ENCODE measurements at regions of chr14 and their contacts with region 1.

Region 1: DNA sequence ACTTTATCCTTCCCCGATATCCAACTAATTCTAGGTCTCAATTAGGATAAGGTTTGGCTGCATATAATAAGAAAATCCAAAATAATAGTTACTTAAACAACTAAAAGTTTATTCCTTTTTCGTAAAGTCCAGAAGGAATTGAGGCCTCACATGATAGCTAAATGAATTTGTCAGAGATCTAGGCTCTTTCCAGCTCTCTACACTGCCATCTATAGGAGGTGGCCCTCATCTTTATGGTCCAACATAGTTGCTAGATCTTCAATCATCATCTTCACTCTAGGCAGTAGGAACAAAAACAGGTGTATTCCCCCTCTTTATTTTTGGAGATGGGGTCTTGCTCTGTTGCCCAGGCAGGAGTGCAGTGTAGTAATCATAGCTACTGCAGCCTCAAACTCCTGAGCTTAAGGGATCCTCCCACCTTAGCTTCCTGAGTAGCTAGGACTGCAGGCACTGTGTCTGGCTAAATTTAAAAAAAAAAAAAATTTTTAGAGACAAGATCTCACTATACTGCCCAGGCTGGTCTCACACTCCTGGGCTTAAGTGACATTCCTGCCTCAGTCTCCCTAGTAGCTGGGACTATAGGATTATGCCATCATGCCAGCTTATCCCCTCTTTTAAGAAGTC is 46.5 kb upstream of the SAV1 start:
- DNase-seq: no peak
- ATAC-seq: peak; percentile 71
- H3K4me3 Mint-ChIP-seq: no peak overlapping the region
- H3K27ac Mint-ChIP-seq: no peak overlapping the region
- H3K4me1 Mint-ChIP-seq: peaks cover 4% of the 10 kb centered on the region; the same call in 1 of the 2 replicates
- H3K27me3 Mint-ChIP-seq: no peaks in the 10 kb centered on the region
- CTCF ChIP-seq: no peak

Region 2: DNA sequence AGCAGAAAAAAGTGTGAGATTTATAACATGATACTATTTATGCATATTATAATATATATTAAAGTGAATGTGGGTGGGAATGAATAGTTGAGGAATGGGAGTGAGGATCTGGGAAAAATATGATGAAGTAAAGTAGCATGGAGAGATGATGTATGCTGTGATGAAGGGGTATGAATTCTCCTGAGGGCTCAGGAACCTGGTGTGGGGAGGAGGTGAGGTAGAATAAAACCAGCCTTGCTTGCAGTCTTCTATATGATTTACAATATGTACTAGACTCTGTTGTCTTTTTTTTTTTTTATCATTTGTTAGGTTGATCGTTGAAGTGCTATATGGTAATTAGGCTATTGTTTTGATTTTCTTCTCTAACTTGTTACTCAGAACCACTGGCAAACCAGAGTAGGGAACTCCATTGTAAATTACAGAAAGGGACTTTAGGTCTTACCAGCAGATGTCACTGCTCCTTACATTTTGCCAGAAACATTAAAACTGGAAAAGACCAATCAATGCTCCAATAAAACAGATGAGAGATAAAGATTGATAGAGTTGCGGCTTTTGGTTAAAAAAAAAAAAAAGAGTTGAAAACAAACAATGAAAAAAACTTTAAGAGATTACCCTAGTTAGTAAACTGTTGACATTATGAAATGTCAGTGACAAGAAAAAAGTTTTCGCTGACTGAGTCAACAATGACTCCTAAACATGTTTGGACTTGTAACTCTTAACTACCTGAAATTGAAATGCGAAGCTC is 114.7 kb before region 1 on chr14:
- CTCF ChIA-PET with region 1: interaction called, 16 read pairs
- POLR2A ChIA-PET with region 1: no interaction called
- DNase-seq: no peak
- ATAC-seq: peak; percentile 78
- H3K4me3 Mint-ChIP-seq: no peak overlapping the region
- H3K27ac Mint-ChIP-seq: 0 out of 2 replicates have a peak overlapping the region, but pooled peaks have one; percentile 39
- H3K4me1 Mint-ChIP-seq: peaks cover 19% of the 10 kb centered on the region
- H3K27me3 Mint-ChIP-seq: no peaks in the 10 kb centered on the region
- CTCF ChIP-seq: no peak

Region 3: GRCh38 chr14:50667996-50668825 is 46.4 kb before region 1 on chr14 and contains the start of gene SAV1:
- CTCF ChIA-PET with region 1: interaction called, 10 read pairs
- POLR2A ChIA-PET with region 1: no interaction called
- DNase-seq: peak; percentile 80
- ATAC-seq: peak; percentile 67
- H3K4me3 Mint-ChIP-seq: no peak within 1 kb of the TSS; the same call in 1 of the 2 replicates
- H3K27ac Mint-ChIP-seq: peak within 1 kb of the TSS; percentile 98
- H3K4me1 Mint-ChIP-seq: peaks cover 21% of the 10 kb centered on the region
- H3K27me3 Mint-ChIP-seq: no peaks in the 10 kb centered on the region
- CTCF ChIP-seq: no peak
- total RNA-seq, gene SAV1: 59.9 to 64.1 TPM (median 61.0 TPM) in 3 replicates

Region 4: GRCh38 chr14:50704454-50705010 is 10.0 kb before region 1 on chr14:
- CTCF ChIA-PET with region 1: interaction called, 11 read pairs
- POLR2A ChIA-PET with region 1: no interaction called
- DNase-seq: no peak
- ATAC-seq: no peak
- H3K4me3 Mint-ChIP-seq: no peak overlapping the region
- H3K27ac Mint-ChIP-seq: no peak overlapping the region
- H3K4me1 Mint-ChIP-seq: no peaks in the 10 kb centered on the region
- H3K27me3 Mint-ChIP-seq: peaks cover 6% of the 10 kb centered on the region; the same call in 1 of the 2 replicates
- CTCF ChIP-seq: no peak

Region 5: DNA sequence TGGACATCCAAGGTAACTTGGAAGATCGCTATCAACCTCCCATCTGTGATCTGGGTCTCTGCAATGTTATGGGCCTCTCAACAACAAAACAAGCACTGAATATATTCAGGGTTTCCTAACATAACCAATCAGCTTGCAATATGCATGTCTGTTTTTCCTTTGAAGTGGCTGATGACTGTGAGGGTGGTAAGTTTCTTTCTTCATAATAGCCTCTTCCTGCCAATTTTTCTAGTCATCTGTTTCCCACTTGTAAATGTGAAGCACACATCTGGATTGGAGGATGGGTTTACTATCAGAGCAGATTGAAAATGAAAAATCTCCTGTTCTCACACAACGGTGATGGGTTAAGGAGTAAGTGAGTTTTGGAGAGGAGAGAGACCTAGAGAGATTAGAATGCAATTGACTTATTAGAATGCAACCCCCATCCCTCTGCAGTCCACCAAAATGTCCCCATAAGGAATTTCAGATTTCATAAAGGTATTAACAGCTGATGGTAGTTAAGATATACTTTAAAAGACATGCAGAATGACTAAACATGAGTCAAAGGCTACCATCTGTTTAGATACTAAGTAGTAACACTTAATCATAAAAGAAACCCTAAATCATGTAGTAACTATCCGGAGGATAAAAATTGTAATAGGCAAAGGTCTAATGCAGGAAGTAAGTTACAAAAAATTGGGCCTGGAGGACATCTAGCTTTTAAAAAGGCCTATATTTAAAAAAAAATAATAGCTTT is 12.0 kb after region 1 on chr14:
- CTCF ChIA-PET with region 1: interaction called, 11 read pairs
- POLR2A ChIA-PET with region 1: no interaction called
- DNase-seq: no peak
- ATAC-seq: no peak
- H3K4me3 Mint-ChIP-seq: no peak overlapping the region
- H3K27ac Mint-ChIP-seq: no peak overlapping the region
- H3K4me1 Mint-ChIP-seq: no peaks in the 10 kb centered on the region
- H3K27me3 Mint-ChIP-seq: no peaks in the 10 kb centered on the region
- CTCF ChIP-seq: no peak

Region 6: GRCh38 chr14:50736932-50737419 is 22.4 kb after region 1 on chr14:
- CTCF ChIA-PET with region 1: interaction called, 15 read pairs
- POLR2A ChIA-PET with region 1: interaction called, 10 read pairs
- DNase-seq: no peak
- ATAC-seq: no peak
- H3K4me3 Mint-ChIP-seq: no peak overlapping the region
- H3K27ac Mint-ChIP-seq: no peak overlapping the region
- H3K4me1 Mint-ChIP-seq: peaks cover 3% of the 10 kb centered on the region; the same call in 1 of the 2 replicates
- H3K27me3 Mint-ChIP-seq: no peaks in the 10 kb centered on the region
- CTCF ChIP-seq: no peak

Region 7: DNA sequence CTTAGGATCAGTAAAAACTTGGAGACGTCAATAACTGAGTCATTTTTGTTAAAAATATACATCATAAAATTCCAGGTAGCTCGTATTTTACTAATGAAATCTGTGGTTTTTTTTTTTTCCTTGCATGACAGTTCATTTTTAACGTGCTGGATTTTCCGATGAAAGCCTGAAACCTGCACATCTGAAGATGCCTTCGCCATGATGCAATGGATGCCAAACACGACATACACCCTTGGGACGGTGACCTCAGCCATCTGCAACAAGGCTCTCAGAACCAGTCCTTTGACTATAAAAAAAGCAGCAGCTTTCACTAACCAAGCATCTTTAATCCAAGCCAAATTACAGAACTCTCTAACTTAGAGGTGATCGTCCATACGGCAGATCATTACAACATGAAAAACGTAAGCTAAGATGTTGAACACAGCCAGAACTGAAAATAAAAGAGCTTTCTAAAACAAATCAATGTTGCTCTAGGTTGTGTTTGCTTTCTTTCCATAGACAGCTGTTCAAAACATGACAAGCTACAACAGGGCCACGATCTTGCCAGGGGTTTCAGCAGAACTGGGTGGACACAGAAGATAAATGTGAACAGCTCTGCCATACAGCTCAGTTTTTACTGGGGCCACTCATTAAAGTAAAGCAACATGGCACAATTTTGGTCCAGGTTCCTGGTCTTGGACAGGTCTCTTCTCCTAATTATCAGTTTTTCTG is 108.6 kb after region 1 on chr14:
- CTCF ChIA-PET with region 1: no interaction called
- POLR2A ChIA-PET with region 1: no interaction called
- DNase-seq: no peak
- ATAC-seq: no peak
- H3K4me3 Mint-ChIP-seq: no peak overlapping the region
- H3K27ac Mint-ChIP-seq: no peak overlapping the region
- H3K4me1 Mint-ChIP-seq: peaks cover 54% of the 10 kb centered on the region
- H3K27me3 Mint-ChIP-seq: peaks cover 71% of the 10 kb centered on the region
- CTCF ChIP-seq: no peak

Measured in WTC11 (cell line).